ENCODE measurements at regions of chr2 and their contacts with region 1.

Region 1: DNA sequence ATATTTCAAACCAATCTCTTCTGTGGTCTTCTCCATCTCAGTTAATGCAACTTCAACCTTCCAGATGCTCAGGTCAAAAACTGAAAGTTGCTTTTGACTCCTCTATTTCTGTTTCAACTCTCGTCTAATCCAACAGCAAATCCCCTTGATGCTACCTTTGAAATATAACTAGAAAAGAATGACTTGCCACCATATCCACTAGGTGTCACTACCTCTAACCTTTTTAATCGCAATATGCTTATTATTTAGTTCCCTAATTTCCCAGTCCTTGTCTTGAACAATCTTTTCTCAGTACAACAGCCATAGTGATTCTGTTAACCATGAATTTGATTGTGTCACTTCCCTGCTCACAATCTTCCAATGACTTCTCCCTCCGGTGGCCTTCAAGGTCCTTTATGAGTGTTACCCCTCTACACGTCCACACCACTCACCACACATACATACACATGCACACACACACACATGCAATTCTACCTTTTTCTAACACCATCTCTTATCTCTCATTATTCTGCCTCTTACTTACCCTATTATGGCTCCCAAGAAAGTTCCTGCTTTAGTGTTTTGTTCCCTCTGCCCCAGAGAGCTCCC is 245.5 kb upstream of the KCNJ3 start:
- DNase-seq: no peak
- H3K4me3 ChIP-seq: no peak overlapping the region
- H3K27ac ChIP-seq: no peak overlapping the region
- H3K4me1 ChIP-seq: no peaks in the 10 kb centered on the region
- H3K27me3 ChIP-seq: no peaks in the 10 kb centered on the region
- CTCF ChIP-seq: peak in 2 of 3 experiments; percentile 31 to 54

Region 2: DNA sequence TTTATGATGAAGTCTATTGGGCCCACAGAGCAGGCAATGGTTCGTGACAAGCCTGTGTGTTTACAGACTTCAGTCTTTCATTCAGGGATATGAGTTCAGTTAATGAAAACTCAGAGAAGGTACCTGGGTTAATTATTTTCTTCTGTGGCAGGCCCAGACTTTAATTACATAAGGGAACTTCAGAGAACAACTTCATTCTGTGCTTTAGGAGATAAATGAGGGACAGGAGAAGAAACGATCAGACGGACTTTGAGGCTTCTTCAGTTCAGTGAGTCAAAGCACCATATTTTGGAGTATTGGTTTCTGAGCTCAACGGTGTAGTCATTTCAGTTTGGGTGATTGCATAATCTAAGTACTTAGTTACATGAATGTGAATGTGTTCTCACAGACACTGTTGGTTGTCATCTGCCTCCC is 42.5 kb after region 1 on chr2:
- intact Hi-C with region 1: no loop called
- DNase-seq: no peak
- H3K4me3 ChIP-seq: no peak overlapping the region
- H3K27ac ChIP-seq: no peak overlapping the region
- H3K4me1 ChIP-seq: no peaks in the 10 kb centered on the region
- H3K27me3 ChIP-seq: no peaks in the 10 kb centered on the region
- CTCF ChIP-seq: no peak

Region 3: GRCh38 chr2:154697418-154698252 is 244.6 kb after region 1 on chr2:
- intact Hi-C with region 1: loop called (anchors 10 kb)
- DNase-seq: peak in 1 of 2 donors; percentile 67
- H3K4me3 ChIP-seq: peak overlapping the region; percentile 64 to 75
- H3K27ac ChIP-seq: peak overlapping the region; percentile 58
- H3K4me1 ChIP-seq: peaks cover 0 to 4% of the 10 kb centered on the region in 2 donors
- H3K27me3 ChIP-seq: no peaks in the 10 kb centered on the region
- CTCF ChIP-seq: no peak